ENCODE measurements at regions of chr2 and their contacts with region 1.

Region 1: DNA sequence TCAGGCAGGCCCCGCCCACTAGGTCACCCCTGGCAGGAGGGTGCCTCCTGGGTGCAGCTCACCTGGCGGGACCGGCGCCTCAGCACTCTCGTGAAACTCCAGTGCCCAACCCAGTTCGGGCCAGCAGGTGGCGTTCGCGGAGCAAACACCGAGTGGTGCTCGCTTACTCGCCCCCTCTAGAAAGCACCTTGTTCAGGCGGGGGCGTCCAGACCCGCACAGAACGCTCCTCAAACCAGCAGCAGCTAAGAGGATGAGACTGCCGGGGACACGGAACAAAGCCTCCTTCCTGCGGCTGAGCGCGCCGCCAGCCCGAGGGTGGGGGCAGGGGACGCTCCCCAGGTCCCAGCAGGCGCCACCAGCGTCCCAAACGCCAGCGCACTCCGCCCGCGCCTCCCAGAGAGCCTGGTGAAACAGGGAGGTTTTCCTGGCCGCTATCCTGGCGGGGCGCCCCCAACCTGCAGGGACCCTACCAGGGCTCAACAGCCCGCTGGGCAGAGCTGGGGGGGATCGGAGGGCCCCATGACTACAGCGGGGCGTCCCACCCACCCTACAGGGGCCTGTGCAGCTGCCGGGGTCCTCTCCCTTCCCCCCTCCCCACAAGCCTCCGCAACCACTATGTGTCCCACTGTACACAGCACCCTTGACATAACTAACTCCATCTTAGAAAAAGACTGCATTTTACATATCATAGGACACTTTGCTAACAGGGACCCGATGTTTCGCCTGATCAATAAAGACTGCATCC is 44.7 kb downstream of the MRPS5 start:
- DNase-seq: peak; percentile 76

Region 2: DNA sequence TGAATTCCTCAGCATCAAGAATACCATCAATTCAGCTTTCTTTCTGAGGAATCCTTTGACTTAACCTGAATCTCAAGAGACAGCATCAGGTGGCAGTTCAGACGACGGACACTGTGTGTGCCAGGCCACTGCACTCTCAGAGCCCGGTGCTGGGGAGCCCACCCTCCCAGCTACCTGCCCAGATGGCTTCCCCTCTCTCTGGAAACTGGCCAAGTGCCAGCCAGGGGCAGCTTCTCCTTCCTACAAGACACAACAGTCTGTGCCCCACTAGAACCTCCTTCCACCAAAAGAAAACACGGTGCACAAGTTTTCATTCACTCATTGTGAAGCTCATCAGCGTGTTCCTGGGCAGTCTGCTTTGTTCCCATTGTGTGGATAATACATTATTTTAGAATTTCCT is 22.9 kb before region 1 on chr2:
- CTCF ChIA-PET with region 1: interaction called, 13 read pairs
- POLR2A ChIA-PET with region 1: no interaction called
- DNase-seq: no peak

Region 3: GRCh38 chr2:95115418-95115817 is 38.5 kb after region 1 on chr2:
- CTCF ChIA-PET with region 1: interaction called, 10 read pairs
- POLR2A ChIA-PET with region 1: no interaction called
- DNase-seq: peak; percentile 70

Region 4: DNA sequence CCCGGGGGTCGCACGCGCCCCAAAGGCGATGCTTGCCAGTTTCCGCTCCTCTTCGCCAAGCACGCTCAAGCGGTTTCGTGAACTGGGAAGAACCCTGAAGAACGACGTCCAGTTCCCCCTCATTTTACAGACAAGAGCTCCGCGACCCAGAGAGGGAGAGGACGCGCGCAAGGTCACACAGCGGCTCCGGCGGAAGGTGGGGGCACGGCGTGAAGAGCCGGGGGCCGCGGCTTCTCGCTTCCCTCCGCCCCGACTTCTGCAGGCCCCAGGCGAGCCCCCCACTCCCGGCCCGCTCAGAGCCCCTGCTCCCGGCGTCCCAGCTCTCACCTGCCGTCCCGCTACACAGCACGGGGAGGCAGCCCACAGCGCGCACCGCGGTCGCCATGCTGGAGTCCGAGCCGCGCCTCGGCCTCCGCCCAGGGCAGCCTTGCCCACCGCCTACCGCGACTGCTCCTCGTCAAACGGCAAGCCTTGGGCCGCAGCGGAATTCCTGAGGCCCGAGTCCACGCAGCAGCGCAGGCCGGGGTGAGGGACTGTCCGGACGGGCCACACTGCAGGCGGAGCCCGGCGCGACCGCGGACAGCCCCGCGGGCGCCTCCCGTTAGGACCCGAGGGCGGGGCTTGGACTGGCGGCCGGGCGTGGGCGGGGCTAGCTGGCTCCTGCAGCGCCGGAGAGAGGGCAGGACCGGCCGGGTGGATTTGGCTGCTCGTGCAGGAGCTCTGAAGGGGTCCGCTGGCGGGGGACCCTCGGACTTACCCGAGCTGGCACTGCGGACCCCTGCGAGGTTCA is 44.6 kb after region 1 on chr2 and contains the start of gene MRPS5:
- CTCF ChIA-PET with region 1: no interaction called
- POLR2A ChIA-PET with region 1: interaction called, 11 read pairs
- DNase-seq: peak; percentile 94

Region 5: DNA sequence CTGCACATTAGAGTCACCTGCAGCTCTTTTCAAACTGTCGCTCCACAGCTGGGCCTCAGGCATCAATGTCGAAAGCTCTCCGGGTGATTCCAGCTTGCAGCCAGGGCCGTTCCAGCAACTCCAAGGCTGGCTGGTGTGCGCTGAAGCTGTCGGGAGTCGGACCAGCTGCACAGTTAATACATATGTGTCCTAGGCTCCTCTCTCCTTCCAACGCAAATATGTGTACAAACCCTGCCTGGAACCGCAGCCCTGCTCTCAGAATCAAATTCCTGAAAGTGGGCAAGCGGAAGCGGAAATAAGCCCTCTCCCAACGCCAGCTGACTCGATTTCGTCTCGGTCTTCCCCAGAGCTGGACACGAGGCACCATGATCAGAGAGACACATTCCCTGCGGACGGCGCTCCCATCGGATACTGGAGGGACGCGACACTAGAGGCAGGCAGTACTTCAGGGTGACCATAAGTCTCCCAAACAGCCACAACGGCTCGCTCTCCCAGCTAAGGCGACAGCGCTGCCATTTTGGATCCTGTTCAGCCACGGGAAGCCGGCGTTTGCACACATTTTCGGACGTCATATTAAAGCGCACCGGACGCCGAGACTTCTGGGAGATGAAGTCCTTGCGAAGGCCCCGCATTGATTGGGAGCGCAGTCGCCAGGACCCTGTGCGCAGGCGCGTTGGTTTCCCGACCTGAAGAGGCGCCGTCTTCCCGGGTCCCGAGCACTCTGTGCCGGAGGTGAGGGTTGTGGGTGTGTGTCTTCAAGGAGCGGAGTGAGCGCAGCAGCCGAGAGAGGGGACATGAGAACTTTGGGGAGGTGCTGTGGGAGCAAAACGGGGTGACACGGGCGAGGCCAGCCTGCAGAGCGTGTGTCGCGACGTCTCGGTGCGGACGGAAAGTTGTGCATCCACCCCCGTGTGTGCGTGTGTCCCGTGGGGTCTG is 88.4 kb after region 1 on chr2 and contains the start of gene ZNF2:
- CTCF ChIA-PET with region 1: no interaction called
- POLR2A ChIA-PET with region 1: no interaction called
- DNase-seq: peak; percentile 98

Measured in HEK293T (cell line).